ENCODE measurements at regions of chr2 and their contacts with region 1.

Region 1: GRCh38 chr2:96536445-96537065 is at the start of gene ARID5A:
- DNase-seq: peak; percentile 96
- H3K4me3 Mint-ChIP-seq: peak within 1 kb of the TSS; percentile 95
- H3K27ac Mint-ChIP-seq: peak within 1 kb of the TSS; percentile 100
- H3K4me1 Mint-ChIP-seq: peaks cover 61% of the 10 kb centered on the region
- H3K27me3 Mint-ChIP-seq: peaks cover 24% of the 10 kb centered on the region

Region 2: DNA sequence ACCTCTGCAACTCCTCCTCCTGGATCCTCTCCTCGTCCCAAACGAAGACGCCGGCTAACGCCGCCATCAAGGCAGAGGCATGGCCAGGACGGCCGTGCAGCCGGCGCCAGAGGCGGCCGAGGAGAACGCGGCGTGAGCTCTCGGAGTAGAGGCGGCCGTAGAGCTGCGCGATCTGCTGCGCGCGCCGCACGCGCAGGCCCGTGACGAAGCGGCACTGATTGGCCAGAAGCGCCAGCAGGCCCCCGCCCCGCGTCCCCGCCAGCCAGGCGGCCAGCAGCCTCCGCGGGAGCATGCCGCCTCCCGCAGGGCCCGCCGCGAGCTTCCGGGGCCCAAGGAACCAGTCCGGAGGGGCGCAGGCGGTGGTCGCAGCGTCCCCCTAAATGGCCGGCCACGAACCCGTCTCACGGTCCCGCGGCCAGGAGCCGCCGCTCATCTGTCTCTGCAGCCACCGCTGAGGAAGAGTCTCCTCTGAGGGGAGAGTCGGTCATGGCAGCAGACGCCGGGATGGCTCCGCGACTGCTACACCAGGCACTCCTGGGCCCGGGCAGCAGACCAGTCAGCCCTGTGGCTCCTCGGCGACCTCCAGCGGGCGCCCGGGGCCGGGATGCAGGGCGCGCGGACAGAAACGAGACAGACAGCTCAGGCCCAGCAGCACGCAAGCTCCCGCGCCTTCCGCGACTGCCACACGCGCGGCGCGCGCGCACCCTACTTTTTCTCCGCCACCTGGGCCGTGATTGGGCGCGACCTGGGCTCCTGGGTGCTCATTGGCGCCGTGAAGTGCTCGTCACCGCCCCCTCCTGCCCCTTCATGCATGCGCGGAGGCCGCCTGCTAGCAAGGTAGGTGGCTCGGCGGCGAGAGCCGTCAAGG is 328.2 kb before region 1 on chr2 and contains the start of gene STARD7:
- CTCF ChIA-PET with region 1: no interaction called
- DNase-seq: peak; percentile 98
- H3K4me3 Mint-ChIP-seq: peak within 1 kb of the TSS; percentile 89
- H3K27ac Mint-ChIP-seq: peak within 1 kb of the TSS; percentile 92
- H3K4me1 Mint-ChIP-seq: peaks cover 55% of the 10 kb centered on the region
- H3K27me3 Mint-ChIP-seq: no peaks in the 10 kb centered on the region

Region 3: GRCh38 chr2:96344011-96344410 is 192.5 kb before region 1 on chr2:
- CTCF ChIA-PET with region 1: no interaction called
- DNase-seq: no peak
- H3K4me3 Mint-ChIP-seq: no peak overlapping the region
- H3K27ac Mint-ChIP-seq: peak overlapping the region; percentile 73
- H3K4me1 Mint-ChIP-seq: peaks cover 33% of the 10 kb centered on the region
- H3K27me3 Mint-ChIP-seq: no peaks in the 10 kb centered on the region

Region 4: GRCh38 chr2:96554293-96555145 is 18.0 kb after region 1 on chr2:
- CTCF ChIA-PET with region 1: interaction called, 24 read pairs
- DNase-seq: peak; percentile 76
- H3K4me3 Mint-ChIP-seq: peak overlapping the region; percentile 10
- H3K27ac Mint-ChIP-seq: peak overlapping the region; percentile 49
- H3K4me1 Mint-ChIP-seq: peaks cover 26% of the 10 kb centered on the region
- H3K27me3 Mint-ChIP-seq: peaks cover 6% of the 10 kb centered on the region

Measured in activated naive CD4-positive, alpha-beta T cell treated with anti-CD3 and anti-CD28 coated beads, Interleukin-2, amount 10 ng/mL, durations not matched to agents 7 days and 5 days (primary cell).